ENCODE measurements at regions of chr6 and their contacts with region 1.

Region 1: GRCh38 chr6:95364016-95364604 is 213.2 kb upstream of the MANEA start:
- DNase-seq: no peak
- H3K4me3 ChIP-seq: no peak overlapping the region
- H3K4me3 Mint-ChIP-seq: no peak overlapping the region
- H3K27ac Mint-ChIP-seq: no peak overlapping the region
- H3K4me1 ChIP-seq: peaks cover 9% of the 10 kb centered on the region
- H3K4me1 Mint-ChIP-seq: peaks cover 12% of the 10 kb centered on the region
- H3K27me3 ChIP-seq: no peaks in the 10 kb centered on the region
- H3K27me3 Mint-ChIP-seq: no peaks in the 10 kb centered on the region
- CTCF ChIP-seq: peak; percentile 26 to 38

Region 2: GRCh38 chr6:95408111-95408510 is 44.0 kb after region 1 on chr6:
- CTCF ChIA-PET with region 1: no interaction called
- POLR2A ChIA-PET with region 1: no interaction called
- intact Hi-C with region 1: no loop called
- DNase-seq: no peak
- H3K4me3 ChIP-seq: no peak overlapping the region
- H3K4me3 Mint-ChIP-seq: no peak overlapping the region
- H3K27ac Mint-ChIP-seq: no peak overlapping the region
- H3K4me1 ChIP-seq: no peaks in the 10 kb centered on the region
- H3K4me1 Mint-ChIP-seq: no peaks in the 10 kb centered on the region
- H3K27me3 ChIP-seq: no peaks in the 10 kb centered on the region
- H3K27me3 Mint-ChIP-seq: no peaks in the 10 kb centered on the region
- CTCF ChIP-seq: no peak

Region 3: GRCh38 chr6:95423331-95423730 is 59.2 kb after region 1 on chr6:
- CTCF ChIA-PET with region 1: no interaction called
- POLR2A ChIA-PET with region 1: no interaction called
- intact Hi-C with region 1: no loop called
- DNase-seq: no peak
- H3K4me3 ChIP-seq: no peak overlapping the region
- H3K4me3 Mint-ChIP-seq: no peak overlapping the region
- H3K27ac Mint-ChIP-seq: no peak overlapping the region
- H3K4me1 ChIP-seq: no peaks in the 10 kb centered on the region
- H3K4me1 Mint-ChIP-seq: no peaks in the 10 kb centered on the region
- H3K27me3 ChIP-seq: no peaks in the 10 kb centered on the region
- H3K27me3 Mint-ChIP-seq: no peaks in the 10 kb centered on the region
- CTCF ChIP-seq: no peak

Region 4: DNA sequence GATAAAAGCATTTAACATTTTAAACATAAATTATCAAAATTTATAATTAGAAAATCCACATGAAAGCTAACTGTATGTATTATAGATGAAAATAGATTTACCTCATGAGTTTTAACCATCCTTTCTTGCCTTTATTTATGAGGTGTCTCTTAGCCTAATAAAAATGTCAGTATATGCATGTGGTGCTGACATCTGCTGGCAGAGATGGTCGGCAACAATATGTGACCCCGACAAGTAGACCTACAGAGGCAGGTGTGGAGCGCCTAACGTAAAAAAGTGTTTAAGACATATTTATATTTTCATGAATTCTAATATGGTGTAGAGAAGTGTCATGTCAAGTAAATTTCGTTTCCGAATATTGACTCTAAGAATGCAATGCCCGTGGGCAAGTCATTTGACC is 502.6 kb after region 1 on chr6:
- CTCF ChIA-PET with region 1: no interaction called
- POLR2A ChIA-PET with region 1: no interaction called
- intact Hi-C with region 1: loop called (anchors 2 kb)
- DNase-seq: peak; percentile 39 to 43
- H3K4me3 ChIP-seq: no peak overlapping the region
- H3K4me3 Mint-ChIP-seq: no peak overlapping the region
- H3K27ac Mint-ChIP-seq: no peak overlapping the region
- H3K4me1 ChIP-seq: no peaks in the 10 kb centered on the region
- H3K4me1 Mint-ChIP-seq: peaks cover 7% of the 10 kb centered on the region
- H3K27me3 ChIP-seq: no peaks in the 10 kb centered on the region
- H3K27me3 Mint-ChIP-seq: no peaks in the 10 kb centered on the region
- CTCF ChIP-seq: peak; percentile 50 to 54

Region 5: GRCh38 chr6:95923518-95923917 is 559.4 kb after region 1 on chr6:
- CTCF ChIA-PET with region 1: no interaction called
- POLR2A ChIA-PET with region 1: no interaction called
- intact Hi-C with region 1: loop called (anchors 5 kb)
- DNase-seq: peak in 1 of 2 experiments; percentile 32
- H3K4me3 ChIP-seq: no peak overlapping the region
- H3K4me3 Mint-ChIP-seq: no peak overlapping the region
- H3K27ac Mint-ChIP-seq: no peak overlapping the region
- H3K4me1 ChIP-seq: no peaks in the 10 kb centered on the region
- H3K4me1 Mint-ChIP-seq: no peaks in the 10 kb centered on the region
- H3K27me3 ChIP-seq: no peaks in the 10 kb centered on the region
- H3K27me3 Mint-ChIP-seq: peaks cover 2% of the 10 kb centered on the region
- CTCF ChIP-seq: peak; percentile 46 to 55

Region 6: DNA sequence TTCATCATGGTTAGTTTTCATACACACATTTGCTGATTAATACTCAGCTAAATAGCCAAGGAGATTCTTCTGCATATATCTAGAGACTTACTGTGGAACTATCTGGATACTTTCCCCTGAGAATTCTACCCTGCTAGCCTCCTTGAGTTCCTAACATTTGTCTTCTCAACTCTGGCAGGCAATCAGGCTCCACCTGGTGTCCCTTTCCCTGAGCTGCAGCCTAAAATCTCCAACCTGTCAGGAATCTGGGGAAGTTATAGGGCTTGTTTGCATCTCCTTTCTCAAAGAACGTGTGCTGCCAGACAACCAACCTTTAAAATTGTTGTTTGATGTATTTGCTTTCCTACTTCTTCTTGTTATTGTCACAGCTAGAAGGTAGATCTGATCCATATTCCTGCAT is 725.1 kb after region 1 on chr6:
- CTCF ChIA-PET with region 1: no interaction called
- POLR2A ChIA-PET with region 1: no interaction called
- intact Hi-C with region 1: loop called (anchors 1 kb)
- DNase-seq: peak; percentile 41 to 50
- H3K4me3 ChIP-seq: no peak overlapping the region
- H3K4me3 Mint-ChIP-seq: no peak overlapping the region
- H3K27ac Mint-ChIP-seq: no peak overlapping the region
- H3K4me1 ChIP-seq: no peaks in the 10 kb centered on the region
- H3K4me1 Mint-ChIP-seq: no peaks in the 10 kb centered on the region
- H3K27me3 ChIP-seq: no peaks in the 10 kb centered on the region
- H3K27me3 Mint-ChIP-seq: no peaks in the 10 kb centered on the region
- CTCF ChIP-seq: peak; percentile 58 to 76

Region 7: GRCh38 chr6:96468681-96469224 is 1104.6 kb after region 1 on chr6:
- CTCF ChIA-PET with region 1: no interaction called
- POLR2A ChIA-PET with region 1: no interaction called
- intact Hi-C with region 1: loop called (anchors 2 kb)
- DNase-seq: no peak
- H3K4me3 ChIP-seq: no peak overlapping the region
- H3K4me3 Mint-ChIP-seq: no peak overlapping the region
- H3K27ac Mint-ChIP-seq: no peak overlapping the region
- H3K4me1 ChIP-seq: peaks cover 7% of the 10 kb centered on the region; the same call in 1 of the 2 replicates
- H3K4me1 Mint-ChIP-seq: no peaks in the 10 kb centered on the region
- H3K27me3 ChIP-seq: no peaks in the 10 kb centered on the region
- H3K27me3 Mint-ChIP-seq: no peaks in the 10 kb centered on the region
- CTCF ChIP-seq: peak; percentile 19 to 33

Measured in Caco-2 (cell line).